ENCODE measurements at regions of chr9 and their contacts with region 1.

Region 1: DNA sequence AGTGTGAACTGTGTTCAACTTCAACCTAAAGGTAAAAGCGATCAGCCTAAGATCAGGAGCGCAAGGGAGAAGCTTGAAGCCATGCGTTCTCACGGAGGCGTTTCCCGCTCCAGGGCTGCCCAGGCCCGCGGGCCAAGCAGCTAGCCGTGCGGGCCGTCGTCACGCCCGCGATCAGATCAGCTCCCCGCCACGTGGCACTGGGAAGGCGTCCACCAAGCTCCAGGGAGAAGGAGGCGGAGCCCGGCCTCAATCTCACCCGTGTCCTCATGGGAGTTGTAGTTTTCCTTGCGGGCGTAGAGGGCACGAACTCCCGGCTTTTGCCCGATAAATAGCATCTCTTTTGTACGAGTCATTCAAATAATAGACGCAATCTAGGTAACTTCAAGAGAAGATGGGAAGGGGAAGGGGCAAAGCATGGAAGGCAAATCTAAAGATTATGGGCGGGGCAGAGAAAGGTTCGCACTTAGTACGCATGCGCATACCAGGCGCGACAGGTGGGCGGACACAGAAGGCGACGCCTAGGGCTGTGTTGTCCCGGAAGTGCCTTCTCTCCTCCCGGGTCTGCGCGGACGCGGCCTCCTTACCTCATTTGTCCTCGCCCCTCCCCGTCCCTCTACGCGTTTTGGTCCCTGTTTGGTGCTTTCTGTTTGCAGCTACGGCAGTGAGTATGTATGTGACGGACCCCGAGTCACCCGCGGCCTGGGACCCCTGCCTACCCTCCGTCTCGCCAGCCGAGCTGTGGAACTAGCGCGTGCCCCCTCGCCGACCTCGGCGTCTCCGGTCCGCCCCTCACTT is 40.8 kb upstream of the ZCCHC7 start:
- H3K4me3 Mint-ChIP-seq: peak overlapping the region; percentile 92
- H3K27ac Mint-ChIP-seq: peak overlapping the region; percentile 89
- H3K4me1 Mint-ChIP-seq: peaks cover 24% of the 10 kb centered on the region
- H3K27me3 Mint-ChIP-seq: peaks cover 23% of the 10 kb centered on the region

Region 2: DNA sequence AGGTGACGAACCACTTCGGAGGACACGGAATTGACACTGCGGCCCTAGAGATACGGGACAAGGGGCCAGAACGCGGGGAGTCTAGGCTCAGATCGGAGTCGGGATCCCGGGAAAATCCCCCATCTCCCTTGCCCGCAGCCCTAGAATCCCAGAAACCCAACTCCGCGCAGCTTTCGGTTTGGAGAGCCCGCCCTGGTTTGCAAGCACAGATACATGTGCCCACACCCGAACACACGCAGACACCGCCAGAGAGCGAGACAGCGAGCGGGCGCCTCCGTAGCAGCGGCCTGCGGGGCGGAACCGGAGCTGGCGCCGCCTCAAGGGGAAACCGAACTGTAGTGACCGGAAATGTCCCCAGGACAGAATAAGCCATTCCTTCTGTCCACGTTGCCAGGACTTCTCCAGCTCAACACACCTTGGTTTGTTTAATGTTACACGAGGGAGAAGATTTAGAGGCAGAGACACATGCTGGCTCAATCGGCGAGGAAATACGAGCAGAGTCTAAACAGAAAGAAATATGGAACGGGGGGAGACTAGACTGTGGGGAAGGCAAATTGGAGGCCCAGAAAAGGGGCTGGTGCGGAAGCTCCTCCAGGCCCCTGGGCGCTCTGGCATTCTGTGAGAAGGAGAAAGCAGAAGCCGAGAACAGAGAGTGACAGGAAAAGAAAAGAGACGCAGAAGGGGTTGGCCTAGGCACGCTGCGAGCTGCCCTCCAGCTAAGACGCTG is 42.6 kb before region 1 on chr9:
- intact Hi-C with region 1: loop called (anchors 2 kb)
- H3K4me3 Mint-ChIP-seq: peak overlapping the region; percentile 89
- H3K27ac Mint-ChIP-seq: peak overlapping the region; percentile 7
- H3K4me1 Mint-ChIP-seq: peaks cover 43% of the 10 kb centered on the region
- H3K27me3 Mint-ChIP-seq: peaks cover 92% of the 10 kb centered on the region

Region 3: GRCh38 chr9:37119907-37120842 is 40.6 kb after region 1 on chr9 and contains the start of gene ZCCHC7:
- intact Hi-C with region 1: loop called (anchors 1 kb)
- H3K4me3 Mint-ChIP-seq: peak within 1 kb of the TSS; percentile 96
- H3K27ac Mint-ChIP-seq: peak within 1 kb of the TSS; percentile 99
- H3K4me1 Mint-ChIP-seq: peaks cover 23% of the 10 kb centered on the region
- H3K27me3 Mint-ChIP-seq: no peaks in the 10 kb centered on the region

Region 4: DNA sequence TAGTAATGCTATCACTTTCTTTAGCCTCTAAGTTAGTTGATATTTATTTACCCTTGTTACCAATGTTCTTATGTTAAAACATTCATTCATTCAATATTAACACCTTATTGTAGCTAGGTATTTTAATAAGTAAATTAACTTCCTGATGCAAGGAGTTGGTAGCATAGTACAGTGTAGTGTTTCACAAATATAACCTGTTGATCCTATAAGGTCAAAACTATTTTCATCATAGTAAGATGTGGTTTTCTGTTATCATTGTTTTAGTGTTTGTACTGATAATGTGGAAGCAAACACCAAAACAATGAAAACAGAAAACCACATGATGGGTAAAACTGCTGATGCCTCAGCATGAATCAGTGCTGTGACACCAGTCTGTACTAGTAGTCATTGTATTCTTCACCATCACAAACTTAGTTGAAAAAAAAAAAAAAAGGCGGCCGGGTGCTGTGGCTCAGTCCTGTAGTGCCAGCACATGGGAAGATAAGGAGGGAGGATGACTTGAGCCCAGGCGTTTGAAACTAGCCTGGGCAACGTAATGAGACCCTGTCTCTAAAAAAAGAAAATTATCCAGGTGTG is 77.3 kb after region 1 on chr9:
- intact Hi-C with region 1: loop called (anchors 10 kb)
- H3K4me3 Mint-ChIP-seq: no peak overlapping the region
- H3K27ac Mint-ChIP-seq: peak overlapping the region; percentile 70
- H3K4me1 Mint-ChIP-seq: peaks cover 24% of the 10 kb centered on the region
- H3K27me3 Mint-ChIP-seq: no peaks in the 10 kb centered on the region

Region 5: DNA sequence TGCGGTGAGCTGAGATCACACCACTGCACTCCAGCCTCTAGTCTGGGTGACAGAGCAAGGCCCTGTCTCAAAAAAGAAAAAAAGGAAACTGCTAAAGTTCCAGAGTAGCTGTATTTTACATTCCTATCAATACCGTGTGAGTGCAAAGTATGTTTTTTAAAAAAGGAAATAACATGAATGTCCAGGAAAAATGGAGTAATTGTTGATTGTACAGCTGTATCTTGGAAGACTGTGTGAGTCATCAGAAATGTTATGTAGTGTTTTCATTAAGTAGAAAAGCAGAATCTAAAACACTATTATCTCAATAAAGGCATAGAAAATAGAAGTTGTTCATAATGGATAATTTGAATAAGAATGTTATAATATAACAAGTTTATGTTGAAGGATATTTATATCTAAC is 94.7 kb after region 1 on chr9:
- intact Hi-C with region 1: no loop called
- H3K4me3 Mint-ChIP-seq: no peak overlapping the region
- H3K27ac Mint-ChIP-seq: no peak overlapping the region
- H3K4me1 Mint-ChIP-seq: no peaks in the 10 kb centered on the region
- H3K27me3 Mint-ChIP-seq: no peaks in the 10 kb centered on the region

Region 6: GRCh38 chr9:37251452-37251851 is 171.9 kb after region 1 on chr9:
- intact Hi-C with region 1: no loop called
- H3K4me3 Mint-ChIP-seq: no peak overlapping the region
- H3K27ac Mint-ChIP-seq: no peak overlapping the region
- H3K4me1 Mint-ChIP-seq: peaks cover 12% of the 10 kb centered on the region
- H3K27me3 Mint-ChIP-seq: no peaks in the 10 kb centered on the region

Measured in dendritic cell treated with granulocyte-macrophage colony-stimulating factor and Interleukin-4, amounts not matched to agents 40 ng/mL and 50 ng/mL, for 4 days (primary cell).